IMR-90 (cell line): ENCODE measurements at regions of chr7 and their contacts with region 1.

Region 1: DNA sequence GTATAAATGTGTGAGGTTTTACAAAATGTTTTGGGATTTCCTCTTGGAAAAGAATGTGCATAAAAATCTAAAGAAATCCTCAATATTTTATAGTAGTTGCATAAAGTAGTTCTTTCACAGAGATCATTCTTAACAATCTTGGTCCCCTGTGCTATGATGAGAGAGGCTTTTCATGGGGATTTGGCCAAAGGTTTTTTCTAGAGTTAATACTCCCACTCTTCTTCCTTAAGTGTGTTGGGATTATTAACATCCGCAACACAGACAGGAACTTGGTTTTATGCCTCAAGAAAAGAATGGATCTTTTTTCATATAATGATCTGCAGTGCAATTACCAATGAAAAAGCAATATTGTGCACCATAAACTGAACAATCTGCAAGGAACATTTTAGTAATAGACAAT is 71.5 kb downstream of the AGMO start:
- DNase-seq: no peak
- ATAC-seq: no peak
- H3K4me3 ChIP-seq: no peak overlapping the region
- H3K27ac ChIP-seq: no peak overlapping the region
- H3K4me1 ChIP-seq: no peaks in the 10 kb centered on the region
- H3K27me3 ChIP-seq: no peaks in the 10 kb centered on the region
- CTCF ChIP-seq: no peak
- POLR2A ChIP-seq: no peak
- RAD21 ChIP-seq: no peak

Region 2: DNA sequence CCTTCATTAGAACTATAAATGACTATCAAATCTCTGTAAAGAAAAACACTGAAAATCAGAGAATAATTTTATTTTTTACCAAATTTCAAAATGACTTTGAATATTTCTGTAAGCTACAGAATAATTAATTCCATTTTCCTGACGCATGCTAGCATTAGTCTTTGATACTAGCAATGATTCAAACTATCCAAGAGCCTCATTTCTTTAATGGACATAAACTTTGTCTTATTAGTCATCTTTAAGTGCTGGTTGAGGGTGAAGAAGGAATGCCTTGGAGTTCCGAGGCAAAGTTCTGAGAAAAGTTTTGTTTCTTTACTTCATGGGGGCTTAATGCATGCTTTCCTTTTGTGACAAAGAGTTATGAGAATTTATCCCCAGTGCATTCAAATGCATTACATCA is 65.8 kb before region 1 on chr7:
- CTCF ChIA-PET with region 1: no interaction called
- POLR2A ChIA-PET with region 1: no interaction called
- dilution Hi-C with region 1: no loop called
- in situ Hi-C with region 1: no loop called
- intact Hi-C with region 1: no loop called
- DNase-seq: peak; percentile 17
- ATAC-seq: peak; percentile 54; the same call in 1 of the 2 replicates
- H3K4me3 ChIP-seq: no peak overlapping the region
- H3K27ac ChIP-seq: no peak overlapping the region
- H3K4me1 ChIP-seq: no peaks in the 10 kb centered on the region
- H3K27me3 ChIP-seq: no peaks in the 10 kb centered on the region
- CTCF ChIP-seq: no peak
- POLR2A ChIP-seq: no peak
- RAD21 ChIP-seq: no peak

Region 3: DNA sequence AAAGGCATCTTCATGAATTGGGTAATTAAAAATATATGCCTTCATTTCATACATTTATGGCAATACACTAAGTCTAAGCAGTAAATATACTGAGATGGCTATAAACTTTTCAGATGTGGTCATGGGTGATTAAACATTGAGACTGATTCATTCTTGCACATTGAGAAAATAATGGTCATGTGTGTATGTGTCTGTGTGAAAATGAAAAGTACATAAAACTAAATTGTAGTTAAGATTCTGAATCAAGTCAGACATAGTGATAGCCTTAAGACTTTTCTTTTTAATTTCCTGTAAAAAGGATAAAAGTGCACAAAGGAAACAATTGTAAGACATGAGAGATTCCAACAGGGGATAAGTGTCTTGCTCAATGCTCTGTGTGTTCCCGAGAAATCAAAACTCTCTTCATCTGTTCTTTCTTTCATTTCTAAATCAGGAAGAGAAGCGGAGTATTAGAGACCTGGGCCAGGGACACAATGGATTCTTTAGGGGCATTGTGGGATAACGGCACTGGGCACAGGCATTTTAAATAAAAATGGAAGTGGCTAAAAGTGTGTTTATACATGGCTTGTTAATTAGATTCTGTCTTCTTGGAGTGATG is 1461.3 kb after region 1 on chr7:
- CTCF ChIA-PET with region 1: no interaction called
- POLR2A ChIA-PET with region 1: no interaction called
- dilution Hi-C with region 1: no loop called
- in situ Hi-C with region 1: no loop called
- intact Hi-C with region 1: loop called (anchors 5 kb)
- DNase-seq: no peak
- ATAC-seq: peak; percentile 21; the same call in 1 of the 2 replicates
- H3K4me3 ChIP-seq: no peak overlapping the region
- H3K27ac ChIP-seq: no peak overlapping the region
- H3K4me1 ChIP-seq: peaks cover 2% of the 10 kb centered on the region; the same call in 1 of the 2 replicates
- H3K27me3 ChIP-seq: no peaks in the 10 kb centered on the region; the same call in 1 of the 2 replicates
- CTCF ChIP-seq: no peak
- POLR2A ChIP-seq: no peak
- RAD21 ChIP-seq: no peak